Activated B cell treated with CpG ODN at 0.5 μM for 24 hours (primary cell): ENCODE measurements at regions of chr1 and their contacts with region 1.

Region 1: GRCh38 chr1:92960395-92961130 is 699 bp downstream of the DIPK1A start:
- DNase-seq: no peak
- ATAC-seq: peak; percentile 49
- H3K4me3 Mint-ChIP-seq: peak overlapping the region; percentile 96
- H3K27ac Mint-ChIP-seq: peak overlapping the region; percentile 98
- H3K4me1 Mint-ChIP-seq: peaks cover 46% of the 10 kb centered on the region
- H3K27me3 Mint-ChIP-seq: no peaks in the 10 kb centered on the region
- CTCF ChIP-seq: no peak

Region 2: GRCh38 chr1:92843429-92844352 is 116.9 kb before region 1 on chr1:
- CTCF ChIA-PET with region 1: interaction called, 6 read pairs
- POLR2A ChIA-PET with region 1: interaction called, 10 read pairs
- intact Hi-C with region 1: no loop called
- DNase-seq: no peak
- ATAC-seq: no peak
- H3K4me3 Mint-ChIP-seq: no peak overlapping the region
- H3K27ac Mint-ChIP-seq: no peak overlapping the region
- H3K4me1 Mint-ChIP-seq: peaks cover 10% of the 10 kb centered on the region
- H3K27me3 Mint-ChIP-seq: no peaks in the 10 kb centered on the region
- CTCF ChIP-seq: no peak

Region 3: GRCh38 chr1:92910081-92910480 is 50.5 kb before region 1 on chr1:
- CTCF ChIA-PET with region 1: interaction called, 12 read pairs
- POLR2A ChIA-PET with region 1: interaction called, 9 read pairs
- intact Hi-C with region 1: loop called (anchors 2 kb)
- DNase-seq: no peak
- ATAC-seq: no peak
- H3K4me3 Mint-ChIP-seq: no peak overlapping the region
- H3K27ac Mint-ChIP-seq: no peak overlapping the region
- H3K4me1 Mint-ChIP-seq: peaks cover 44% of the 10 kb centered on the region
- H3K27me3 Mint-ChIP-seq: no peaks in the 10 kb centered on the region
- CTCF ChIP-seq: no peak

Region 4: GRCh38 chr1:92975551-92976232 is 15.1 kb after region 1 on chr1:
- CTCF ChIA-PET with region 1: interaction called, 41 read pairs
- POLR2A ChIA-PET with region 1: interaction called, 375 read pairs
- intact Hi-C with region 1: loop called (anchors 1 kb)
- DNase-seq: peak; percentile 48
- ATAC-seq: peak; percentile 73
- H3K4me3 Mint-ChIP-seq: peak overlapping the region; percentile 67
- H3K27ac Mint-ChIP-seq: peak overlapping the region; percentile 99
- H3K4me1 Mint-ChIP-seq: peaks cover 91% of the 10 kb centered on the region
- H3K27me3 Mint-ChIP-seq: no peaks in the 10 kb centered on the region
- CTCF ChIP-seq: no peak

Region 5: DNA sequence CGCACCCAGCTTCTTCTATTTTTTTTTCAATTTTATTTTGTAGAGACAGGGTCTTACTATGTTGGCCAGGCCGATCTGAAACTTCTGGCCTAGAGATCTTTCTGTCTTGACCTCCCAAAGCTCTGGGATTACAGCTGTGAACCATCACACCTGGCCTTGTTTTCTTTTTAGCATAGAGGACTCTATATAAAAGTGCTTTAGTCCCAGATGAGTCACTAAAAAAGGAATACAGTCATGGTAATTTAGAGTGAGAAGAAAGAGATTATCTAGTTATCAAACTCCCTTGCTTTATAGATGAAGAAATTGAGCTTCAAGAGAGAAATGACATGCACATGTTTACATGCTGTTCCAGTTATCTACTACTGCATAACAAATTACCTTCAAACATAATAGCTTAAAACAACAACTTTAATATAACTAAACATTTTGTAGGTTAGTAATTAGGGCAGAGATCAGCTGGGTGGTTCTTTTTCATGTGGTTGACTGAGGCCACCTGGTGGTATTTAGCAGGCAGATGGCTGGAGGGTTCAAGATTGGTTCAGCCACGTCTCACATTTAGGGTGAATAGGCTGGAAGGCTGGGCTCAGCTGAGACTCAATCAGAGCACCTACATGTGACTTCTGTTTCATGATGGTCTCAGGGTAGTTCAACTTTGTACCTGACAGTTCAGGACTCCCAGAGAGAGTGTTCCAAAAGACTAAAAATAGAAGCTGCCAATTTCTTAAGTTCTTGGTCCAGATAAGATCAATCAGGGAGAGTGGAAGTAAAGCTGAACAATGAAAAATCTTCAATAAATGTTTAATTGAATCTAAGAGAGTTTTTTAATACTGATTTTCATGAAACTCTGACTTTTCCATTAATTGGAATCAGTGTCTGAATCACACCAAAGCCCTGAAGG is 101.6 kb after region 1 on chr1:
- CTCF ChIA-PET with region 1: interaction called, 13 read pairs
- POLR2A ChIA-PET with region 1: interaction called, 3 read pairs
- intact Hi-C with region 1: loop called (anchors 1 kb)
- DNase-seq: no peak
- ATAC-seq: peak; percentile 82
- H3K4me3 Mint-ChIP-seq: no peak overlapping the region
- H3K27ac Mint-ChIP-seq: no peak overlapping the region
- H3K4me1 Mint-ChIP-seq: no peaks in the 10 kb centered on the region
- H3K27me3 Mint-ChIP-seq: peaks cover 13% of the 10 kb centered on the region
- CTCF ChIP-seq: no peak